Caco-2 (cell line): ENCODE measurements at regions of chr21 and their contacts with region 1.

Region 1: DNA sequence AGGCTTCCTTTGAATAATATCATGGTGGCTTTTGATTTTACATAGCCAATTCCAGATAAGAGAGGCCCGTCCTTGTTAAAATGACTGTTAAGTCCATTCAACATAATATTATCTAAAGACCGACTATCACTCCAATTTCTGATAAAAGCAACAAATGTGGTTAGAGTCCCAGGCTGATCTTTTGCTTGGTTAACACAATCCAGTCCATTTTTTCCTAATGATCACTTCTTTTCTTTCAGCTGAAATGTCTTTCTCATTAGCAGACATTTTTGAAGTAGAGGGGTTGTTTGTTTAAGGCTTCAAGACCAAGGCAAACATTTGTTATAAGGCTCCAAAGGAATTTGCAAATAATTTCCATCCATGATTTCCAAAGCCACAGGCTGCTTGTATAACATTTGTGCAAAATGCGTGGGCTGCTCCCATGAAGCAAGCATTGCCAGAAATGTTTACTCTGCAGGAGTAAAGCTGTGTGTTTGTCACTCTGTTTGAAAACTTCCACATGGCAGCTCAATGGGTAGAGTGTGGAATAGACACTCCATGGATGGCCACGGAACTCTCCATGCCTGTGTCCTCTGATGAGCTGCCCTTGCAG is 111.5 kb downstream of the PSMG1 start:
- DNase-seq: peak in 1 of 2 experiments; percentile 44
- H3K4me3 ChIP-seq: no peak overlapping the region
- H3K4me3 Mint-ChIP-seq: no peak overlapping the region
- H3K27ac Mint-ChIP-seq: no peak overlapping the region
- H3K4me1 ChIP-seq: peaks cover 14% of the 10 kb centered on the region
- H3K4me1 Mint-ChIP-seq: peaks cover 8% of the 10 kb centered on the region
- H3K27me3 ChIP-seq: no peaks in the 10 kb centered on the region
- H3K27me3 Mint-ChIP-seq: no peaks in the 10 kb centered on the region
- CTCF ChIP-seq: no peak

Region 2: GRCh38 chr21:38869946-38870345 is 201.8 kb before region 1 on chr21:
- CTCF ChIA-PET with region 1: no interaction called
- POLR2A ChIA-PET with region 1: no interaction called
- intact Hi-C with region 1: no loop called
- DNase-seq: peak in 1 of 2 experiments; percentile 13
- H3K4me3 ChIP-seq: no peak overlapping the region
- H3K4me3 Mint-ChIP-seq: no peak overlapping the region
- H3K27ac Mint-ChIP-seq: no peak overlapping the region
- H3K4me1 ChIP-seq: no peaks in the 10 kb centered on the region
- H3K4me1 Mint-ChIP-seq: no peaks in the 10 kb centered on the region
- H3K27me3 ChIP-seq: no peaks in the 10 kb centered on the region
- H3K27me3 Mint-ChIP-seq: no peaks in the 10 kb centered on the region
- CTCF ChIP-seq: peak in 1 of 2 experiments; percentile 38

Region 3: GRCh38 chr21:39033878-39034602 is 37.7 kb before region 1 on chr21:
- CTCF ChIA-PET with region 1: no interaction called
- POLR2A ChIA-PET with region 1: no interaction called
- intact Hi-C with region 1: loop called (anchors 5 kb)
- DNase-seq: peak; percentile 69 to 84
- H3K4me3 ChIP-seq: no peak overlapping the region
- H3K4me3 Mint-ChIP-seq: peak overlapping the region; percentile 30
- H3K27ac Mint-ChIP-seq: peak overlapping the region; percentile 83
- H3K4me1 ChIP-seq: peaks cover 32% of the 10 kb centered on the region
- H3K4me1 Mint-ChIP-seq: peaks cover 34% of the 10 kb centered on the region
- H3K27me3 ChIP-seq: no peaks in the 10 kb centered on the region
- H3K27me3 Mint-ChIP-seq: no peaks in the 10 kb centered on the region
- CTCF ChIP-seq: no peak

Region 4: DNA sequence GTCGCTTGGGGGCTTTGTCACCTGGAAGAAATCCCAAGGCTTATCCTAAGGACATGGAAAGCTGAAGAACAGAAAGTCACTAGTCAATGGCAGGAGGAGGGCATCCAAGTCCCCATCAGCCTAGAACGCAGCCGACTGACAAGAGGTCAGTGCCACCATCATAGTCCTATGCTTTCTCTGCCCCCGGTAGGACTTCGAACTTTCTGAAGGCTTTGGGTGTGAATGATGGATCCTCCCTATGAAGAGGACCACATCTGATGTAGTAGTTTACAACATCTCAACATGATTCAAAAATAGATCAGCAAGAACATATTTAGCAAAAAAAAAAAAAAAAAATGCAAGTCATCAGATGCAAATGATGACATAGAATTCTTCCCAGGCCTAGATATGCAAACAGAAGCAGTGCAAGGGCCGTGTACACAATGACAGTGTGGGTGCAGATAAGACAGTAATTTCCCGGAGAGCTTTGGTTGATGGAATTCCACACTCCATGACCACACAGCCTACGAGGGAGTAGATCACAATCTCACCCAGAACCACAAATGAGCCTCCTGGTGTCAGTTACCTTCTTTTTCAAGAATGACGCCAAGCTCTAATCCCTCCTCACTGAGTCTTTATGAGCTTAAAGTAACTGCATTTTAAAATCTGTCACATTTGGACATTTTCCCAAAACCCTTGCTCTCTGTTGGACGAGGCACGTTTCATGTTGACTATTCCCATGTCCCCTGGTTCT is 23.3 kb after region 1 on chr21:
- CTCF ChIA-PET with region 1: no interaction called
- POLR2A ChIA-PET with region 1: no interaction called
- intact Hi-C with region 1: loop called (anchors 1 kb)
- DNase-seq: peak; percentile 80 to 90
- H3K4me3 ChIP-seq: no peak overlapping the region
- H3K4me3 Mint-ChIP-seq: no peak overlapping the region
- H3K27ac Mint-ChIP-seq: peak overlapping the region; percentile 84
- H3K4me1 ChIP-seq: peaks cover 30% of the 10 kb centered on the region
- H3K4me1 Mint-ChIP-seq: peaks cover 39% of the 10 kb centered on the region
- H3K27me3 ChIP-seq: no peaks in the 10 kb centered on the region
- H3K27me3 Mint-ChIP-seq: no peaks in the 10 kb centered on the region
- CTCF ChIP-seq: no peak